Activated CD4-positive, alpha-beta T cell treated with anti-CD3 and anti-CD28 coated beads for 36 hours (primary cell): ENCODE measurements at regions of chr5 and their contacts with region 1.

Region 1: DNA sequence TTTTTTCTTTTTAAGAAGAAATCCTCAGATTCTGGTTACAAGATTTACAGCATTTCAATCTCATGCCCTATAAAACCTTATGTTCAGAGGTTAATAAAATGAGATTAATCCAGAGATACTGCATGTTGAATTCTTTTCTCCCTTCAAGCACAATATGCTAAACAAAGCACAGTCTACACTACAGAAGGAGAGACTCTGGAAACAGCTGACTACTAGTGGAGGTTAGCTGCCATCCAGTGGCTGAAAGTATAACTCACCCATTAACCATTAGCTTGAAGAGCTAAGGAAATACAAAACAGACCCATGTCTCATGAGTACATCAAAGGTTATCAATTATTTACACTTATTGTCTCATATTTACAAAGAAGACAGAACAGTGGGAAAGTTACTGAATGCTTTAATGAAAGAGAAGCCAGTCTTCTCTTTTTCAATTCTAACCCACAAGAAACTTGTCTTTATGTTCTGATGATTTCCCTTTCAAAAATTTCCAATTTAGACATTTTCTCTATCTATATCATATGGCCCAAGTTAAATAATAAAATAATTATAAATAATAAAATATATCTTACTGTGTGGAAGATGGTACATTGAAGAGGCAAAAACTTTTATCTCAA is 12.7 kb upstream of the DNAH5 start:
- DNase-seq: peak; percentile 18
- ATAC-seq: no peak
- H3K4me3 Mint-ChIP-seq: no peak overlapping the region
- H3K27ac Mint-ChIP-seq: no peak overlapping the region
- H3K4me1 Mint-ChIP-seq: no peaks in the 10 kb centered on the region
- H3K27me3 Mint-ChIP-seq: peaks cover 6% of the 10 kb centered on the region

Region 2: DNA sequence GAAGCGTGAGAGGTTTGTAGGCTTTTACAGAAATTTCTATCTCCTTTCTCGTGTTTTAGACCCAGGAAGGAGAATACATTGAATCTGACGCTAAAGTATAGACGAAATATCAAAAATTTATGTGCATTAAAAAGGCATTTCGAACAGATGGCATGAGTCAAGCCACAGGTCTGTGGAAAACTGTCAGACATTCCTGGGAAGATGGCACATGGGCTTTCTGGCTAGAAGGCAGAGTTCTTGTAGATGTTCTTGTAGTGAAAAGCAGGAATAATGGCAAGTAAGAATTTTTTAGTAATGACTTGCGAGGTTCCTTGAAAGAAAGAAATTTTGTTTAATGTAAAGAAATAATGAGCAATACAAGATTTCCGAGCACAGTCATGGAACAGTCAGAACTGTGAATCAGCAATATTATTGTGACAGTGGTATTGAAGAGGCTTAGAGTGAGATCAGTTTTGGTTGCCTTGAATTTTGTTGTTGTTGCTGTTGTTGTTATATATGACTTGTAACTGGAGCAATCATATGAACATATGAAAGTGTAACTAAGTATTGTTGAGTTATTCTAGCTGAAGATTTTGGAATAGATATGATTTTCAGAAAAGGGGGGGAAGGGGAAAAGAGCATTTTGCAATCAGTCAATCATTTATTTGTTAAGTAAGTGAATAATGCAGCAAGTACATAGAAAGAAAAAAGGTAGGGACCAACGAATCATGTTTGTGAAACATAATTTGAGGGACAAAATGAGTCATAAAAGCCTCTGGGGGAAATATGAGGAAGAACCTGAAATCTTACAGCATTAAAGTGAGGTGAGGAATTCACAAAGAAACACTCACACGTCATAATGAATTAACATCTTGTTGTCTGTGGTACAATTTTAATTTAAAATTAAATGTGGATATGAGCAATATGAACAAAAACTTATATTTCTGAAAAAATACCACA is 1713.9 kb before region 1 on chr5:
- CTCF ChIA-PET with region 1: no interaction called
- POLR2A ChIA-PET with region 1: no interaction called
- intact Hi-C with region 1: no loop called
- DNase-seq: no peak
- ATAC-seq: no peak
- H3K4me3 Mint-ChIP-seq: no peak overlapping the region
- H3K27ac Mint-ChIP-seq: no peak overlapping the region
- H3K4me1 Mint-ChIP-seq: no peaks in the 10 kb centered on the region
- H3K27me3 Mint-ChIP-seq: no peaks in the 10 kb centered on the region

Region 3: GRCh38 chr5:12292610-12293204 is 1664.4 kb before region 1 on chr5:
- CTCF ChIA-PET with region 1: no interaction called
- POLR2A ChIA-PET with region 1: no interaction called
- intact Hi-C with region 1: loop called in 1 of 2 experiments (anchors 5 kb)
- DNase-seq: no peak
- ATAC-seq: no peak
- H3K4me3 Mint-ChIP-seq: no peak overlapping the region
- H3K27ac Mint-ChIP-seq: no peak overlapping the region
- H3K4me1 Mint-ChIP-seq: no peaks in the 10 kb centered on the region
- H3K27me3 Mint-ChIP-seq: no peaks in the 10 kb centered on the region

Region 4: GRCh38 chr5:14783691-14784206 is 826.6 kb after region 1 on chr5:
- CTCF ChIA-PET with region 1: no interaction called
- POLR2A ChIA-PET with region 1: no interaction called
- intact Hi-C with region 1: no loop called
- DNase-seq: no peak
- ATAC-seq: peak; percentile 90
- H3K4me3 Mint-ChIP-seq: no peak overlapping the region
- H3K27ac Mint-ChIP-seq: no peak overlapping the region
- H3K4me1 Mint-ChIP-seq: peaks cover 54% of the 10 kb centered on the region
- H3K27me3 Mint-ChIP-seq: no peaks in the 10 kb centered on the region